ENCODE measurements at regions of chr11 and their contacts with region 1.

Region 1: DNA sequence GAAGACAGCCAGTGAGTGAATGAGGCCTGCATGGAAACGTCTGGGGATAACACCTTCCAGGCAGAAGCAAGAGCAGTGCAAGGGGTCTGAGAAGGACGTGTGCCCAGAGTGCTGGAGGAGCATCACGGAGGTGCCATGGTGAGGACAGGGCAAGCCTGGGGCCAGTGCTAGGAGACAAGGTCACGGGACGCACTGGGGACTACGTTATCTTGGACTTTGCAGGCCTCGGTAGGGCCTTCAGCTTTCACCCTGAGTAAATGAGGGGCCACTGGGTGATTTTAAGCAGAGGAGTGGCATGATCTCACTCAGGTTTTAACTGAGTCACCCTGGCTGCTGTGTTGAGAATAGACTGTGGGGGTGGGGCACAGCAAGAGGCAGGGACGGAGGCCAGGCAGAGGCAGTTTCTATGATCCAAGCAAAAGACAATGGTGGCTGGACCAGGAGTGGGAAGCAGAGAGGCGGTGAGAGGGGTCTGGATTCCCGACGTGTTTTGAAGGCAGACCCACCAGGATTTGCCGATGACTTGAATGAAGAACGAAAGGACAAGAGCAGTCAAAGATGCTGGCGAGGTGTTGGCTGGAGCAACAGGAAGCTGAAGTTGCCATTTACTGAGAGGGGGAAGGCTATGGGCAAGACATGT is 102.7 kb upstream of the PARVA start:
- DNase-seq: peak in 1 of 5 donors; percentile 7
- ATAC-seq: peak in 1 of 4 donors; percentile 9
- H3K4me3 ChIP-seq: no peak overlapping the region
- H3K27ac ChIP-seq: no peak overlapping the region
- H3K4me1 ChIP-seq: peaks cover 0 to 11% (median 3%) of the 10 kb centered on the region in 12 donors
- H3K27me3 ChIP-seq: no peaks in the 10 kb centered on the region
- CTCF ChIP-seq: no peak
- POLR2A ChIP-seq: no peak

Region 2: GRCh38 chr11:11931461-11932055 is 343.1 kb before region 1 on chr11:
- intact Hi-C with region 1: loop called in 1 of 10 experiments (anchors 10 kb)
- DNase-seq: peak in 1 of 5 donors; percentile 9
- ATAC-seq: peak in 3 of 4 donors; percentile 47 to 69 (median 63)
- H3K4me3 ChIP-seq: no peak overlapping the region
- H3K27ac ChIP-seq: peak overlapping the region in 1 of 12 donors; percentile 14
- H3K4me1 ChIP-seq: peaks cover 0 to 10% (median under 1%) of the 10 kb centered on the region in 12 donors
- H3K27me3 ChIP-seq: no peaks in the 10 kb centered on the region
- CTCF ChIP-seq: peak; percentile 56 to 82 (median 69)
- POLR2A ChIP-seq: no peak

Region 3: GRCh38 chr11:12159351-12160099 is 115.2 kb before region 1 on chr11:
- intact Hi-C with region 1: no loop called
- DNase-seq: no peak
- ATAC-seq: peak; percentile 39 to 56 (median 46)
- H3K4me3 ChIP-seq: no peak overlapping the region
- H3K27ac ChIP-seq: peak overlapping the region; percentile 66 to 96 (median 86)
- H3K4me1 ChIP-seq: peaks cover 3 to 90% (median 74%) of the 10 kb centered on the region in 12 donors
- H3K27me3 ChIP-seq: no peaks in the 10 kb centered on the region
- CTCF ChIP-seq: no peak
- POLR2A ChIP-seq: no peak

Measured in heart left ventricle (tissue), 16 donors.